ENCODE measurements at regions of chr5 and their contacts with region 1.

Region 1: GRCh38 chr5:160237571-160238093 is 8.3 kb downstream of the FABP6 start:
- DNase-seq: no peak
- H3K4me3 ChIP-seq: no peak overlapping the region
- H3K27ac ChIP-seq: no peak overlapping the region
- H3K4me1 ChIP-seq: no peaks in the 10 kb centered on the region
- CTCF ChIP-seq: no peak

Region 2: DNA sequence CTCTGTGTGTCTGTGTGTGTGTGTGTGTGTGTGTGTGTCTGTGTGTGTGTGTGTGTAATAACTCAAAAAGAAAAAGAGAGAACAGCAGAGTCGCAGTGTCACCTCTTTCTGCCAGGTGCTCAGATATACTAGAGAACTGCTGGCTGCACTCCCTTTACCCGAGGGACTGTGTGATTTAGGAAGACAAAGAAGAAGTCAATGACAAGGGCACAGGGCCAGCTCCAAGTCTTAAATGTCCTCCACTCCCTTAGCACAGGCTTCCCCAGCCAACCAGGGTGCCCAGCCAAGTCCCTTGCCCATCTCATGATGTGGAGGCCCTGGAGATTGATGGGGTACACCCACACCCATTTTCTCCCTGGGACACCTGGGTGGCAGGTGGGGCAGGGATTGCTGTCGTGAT is 66.1 kb after region 1 on chr5:
- CTCF ChIA-PET with region 1: no interaction called
- POLR2A ChIA-PET with region 1: no interaction called
- intact Hi-C with region 1: no loop called
- DNase-seq: no peak
- H3K4me3 ChIP-seq: no peak overlapping the region
- H3K27ac ChIP-seq: no peak overlapping the region
- H3K4me1 ChIP-seq: no peaks in the 10 kb centered on the region
- CTCF ChIP-seq: no peak

Region 3: GRCh38 chr5:160342403-160342941 is 104.8 kb after region 1 on chr5:
- CTCF ChIA-PET with region 1: no interaction called
- POLR2A ChIA-PET with region 1: interaction called, 3 read pairs
- intact Hi-C with region 1: loop called (anchors 2 kb)
- DNase-seq: no peak
- H3K4me3 ChIP-seq: no peak overlapping the region
- H3K27ac ChIP-seq: no peak overlapping the region
- H3K4me1 ChIP-seq: no peaks in the 10 kb centered on the region
- CTCF ChIP-seq: no peak